ENCODE measurements at regions of chr1 and their contacts with region 1.

Region 1: GRCh38 chr1:99535470-99536164 is 110.3 kb upstream of the PALMD start:
- DNase-seq: no peak
- ATAC-seq: no peak
- H3K4me3 Mint-ChIP-seq: no peak overlapping the region
- H3K27ac Mint-ChIP-seq: no peak overlapping the region
- H3K4me1 Mint-ChIP-seq: no peaks in the 10 kb centered on the region
- H3K27me3 Mint-ChIP-seq: no peaks in the 10 kb centered on the region
- CTCF ChIP-seq: no peak

Region 2: DNA sequence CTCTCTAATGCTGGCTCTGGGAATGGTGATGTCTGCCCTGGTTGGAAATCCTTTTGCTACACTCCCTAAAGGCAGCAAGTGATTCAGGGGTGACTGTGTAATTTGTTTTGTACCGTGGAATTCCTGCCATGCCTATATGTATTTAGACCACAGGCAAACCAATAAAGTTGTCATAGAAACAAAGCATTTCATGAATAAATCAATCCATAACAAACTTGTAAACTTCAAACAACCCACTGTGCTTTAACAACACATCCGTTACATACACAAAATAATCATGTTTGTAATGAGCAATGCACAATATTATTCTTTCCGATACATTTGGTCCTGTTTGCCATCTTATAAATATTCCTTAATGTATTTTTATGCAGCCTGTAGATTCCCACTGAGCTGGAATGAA is 1204.4 kb before region 1 on chr1:
- CTCF ChIA-PET with region 1: no interaction called
- POLR2A ChIA-PET with region 1: no interaction called
- intact Hi-C with region 1: loop called (anchors 5 kb)
- DNase-seq: no peak
- ATAC-seq: no peak
- H3K4me3 Mint-ChIP-seq: no peak overlapping the region
- H3K27ac Mint-ChIP-seq: no peak overlapping the region
- H3K4me1 Mint-ChIP-seq: no peaks in the 10 kb centered on the region
- H3K27me3 Mint-ChIP-seq: no peaks in the 10 kb centered on the region
- CTCF ChIP-seq: no peak